GM12878 (cell line): ENCODE measurements at regions of chr5 and their contacts with region 1.

Region 1: DNA sequence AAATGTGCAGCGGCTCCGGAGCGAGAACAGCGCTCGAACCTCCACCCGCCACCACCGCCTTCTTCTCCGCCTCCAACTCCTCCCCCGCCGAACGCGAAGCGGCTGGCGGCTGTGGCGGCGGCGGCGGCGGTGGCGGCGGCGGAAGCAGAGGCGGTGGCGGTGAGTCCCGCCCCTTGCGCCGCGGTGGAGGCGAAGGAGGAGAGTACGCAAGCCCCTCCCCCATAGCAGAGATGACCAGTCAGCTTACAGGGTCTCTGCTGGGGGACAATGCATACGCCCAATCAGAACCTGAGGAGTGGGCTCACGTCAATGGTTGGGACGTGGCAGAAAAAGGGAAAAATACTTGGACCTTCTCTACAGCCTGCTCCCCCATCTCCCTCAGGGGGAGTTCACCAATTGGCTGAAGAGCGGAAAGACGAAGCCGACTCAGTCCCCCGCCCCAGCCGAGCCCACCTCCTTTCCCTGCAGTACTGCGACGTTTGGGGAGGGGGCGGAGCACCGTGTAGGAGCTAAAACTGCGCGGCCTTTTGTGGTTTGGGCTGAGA is at the start of gene PJA2:
- DNase-seq: peak; percentile 99
- ATAC-seq: peak; percentile 84
- H3K4me3 ChIP-seq: peak within 1 kb of the TSS; percentile 92
- H3K27ac ChIP-seq: peak within 1 kb of the TSS; percentile 98
- H3K4me1 ChIP-seq: peaks cover 10% of the 10 kb centered on the region; the same call in 1 of the 2 replicates
- H3K27me3 ChIP-seq: no peaks in the 10 kb centered on the region
- CTCF ChIP-seq: no peak
- EP300 ChIP-seq: peak in 1 of 2 experiments; percentile 60; a peak in 2 of 4 replicates
- POLR2A ChIP-seq: no peak
- RAD21 ChIP-seq: no peak
- polyA plus RNA-seq, gene PJA2: 27.8 to 28.2 TPM

Region 2: GRCh38 chr5:108381954-108382783 is 1027.7 kb before region 1 on chr5 and contains the start of gene FBXL17:
- CTCF ChIA-PET with region 1: no interaction called
- POLR2A ChIA-PET with region 1: no interaction called
- RAD21 ChIA-PET with region 1: no interaction called
- SMC1A ChIA-PET with region 1: no interaction called
- in situ Hi-C with region 1: no loop called
- intact Hi-C with region 1: loop called (anchors 5 kb)
- DNase-seq: peak; percentile 73
- ATAC-seq: peak; percentile 82
- H3K4me3 ChIP-seq: peak within 1 kb of the TSS; percentile 76
- H3K27ac ChIP-seq: peak within 1 kb of the TSS; percentile 94
- H3K4me1 ChIP-seq: 0 out of 2 replicates have a peak, but pooled peaks cover 2% of the 10 kb centered on the region
- H3K27me3 ChIP-seq: no peaks in the 10 kb centered on the region
- CTCF ChIP-seq: no peak
- EP300 ChIP-seq: peak; percentile 28 to 54; a peak in 1 of 4 replicates
- POLR2A ChIP-seq: peak; percentile 91
- RAD21 ChIP-seq: no peak
- polyA plus RNA-seq, gene FBXL17: 0.88 to 2.1 TPM

Region 3: DNA sequence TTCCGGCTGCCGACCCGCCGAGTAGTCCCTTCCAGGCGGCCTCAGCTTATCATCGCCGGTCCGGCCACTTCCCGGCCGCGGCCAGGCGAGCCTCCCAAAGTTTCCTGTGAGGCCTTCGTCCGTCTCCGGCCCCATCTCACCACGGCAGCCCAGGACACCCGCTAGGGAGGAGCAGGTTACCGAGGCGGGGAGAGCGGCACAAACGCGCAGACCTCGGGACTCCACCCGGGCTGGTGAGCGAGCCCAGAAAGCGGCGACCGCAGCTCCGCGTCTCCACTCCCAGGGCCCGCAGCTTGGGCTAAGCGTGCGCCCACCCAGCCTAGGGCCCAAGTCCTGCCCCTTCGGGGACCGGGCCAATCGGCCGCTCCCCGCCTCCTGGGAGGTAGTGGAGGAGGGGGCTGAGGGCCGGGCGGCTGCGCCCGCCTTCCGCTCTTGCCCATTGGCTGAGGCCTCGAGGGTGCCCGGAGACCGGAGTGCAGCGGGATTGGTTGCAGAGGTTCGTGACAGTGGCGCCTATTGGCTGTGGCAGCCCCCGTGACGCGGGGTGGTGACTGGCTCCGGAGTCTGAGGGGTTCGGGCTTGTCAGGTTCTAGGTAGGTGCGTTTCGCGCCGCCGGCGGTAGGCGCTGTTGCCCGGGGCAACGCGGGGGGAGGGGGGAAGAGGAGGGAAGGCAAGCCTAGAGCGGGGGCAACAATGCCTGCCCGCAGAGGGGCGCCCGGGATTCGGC is 661.4 kb before region 1 on chr5:
- CTCF ChIA-PET with region 1: no interaction called
- POLR2A ChIA-PET with region 1: interaction called, 4 read pairs
- RAD21 ChIA-PET with region 1: no interaction called
- SMC1A ChIA-PET with region 1: interaction called, 3 read pairs
- in situ Hi-C with region 1: no loop called
- intact Hi-C with region 1: loop called (anchors 1 kb)
- DNase-seq: peak; percentile 97
- ATAC-seq: peak; percentile 94
- H3K4me3 ChIP-seq: peak overlapping the region; percentile 93
- H3K27ac ChIP-seq: peak overlapping the region; percentile 90
- H3K4me1 ChIP-seq: no peaks in the 10 kb centered on the region
- H3K27me3 ChIP-seq: no peaks in the 10 kb centered on the region
- CTCF ChIP-seq: peak in 1 of 3 experiments; percentile 14; a peak in 1 of 6 replicates
- EP300 ChIP-seq: no peak
- POLR2A ChIP-seq: peak; percentile 99
- RAD21 ChIP-seq: peak; percentile 31; the same call in 1 of the 2 replicates

Region 4: GRCh38 chr5:109136906-109137305 is 273.0 kb before region 1 on chr5:
- CTCF ChIA-PET with region 1: no interaction called
- POLR2A ChIA-PET with region 1: no interaction called
- RAD21 ChIA-PET with region 1: no interaction called
- SMC1A ChIA-PET with region 1: no interaction called
- in situ Hi-C with region 1: no loop called
- intact Hi-C with region 1: no loop called
- DNase-seq: no peak
- ATAC-seq: no peak
- H3K4me3 ChIP-seq: no peak overlapping the region
- H3K27ac ChIP-seq: no peak overlapping the region
- H3K4me1 ChIP-seq: no peaks in the 10 kb centered on the region
- H3K27me3 ChIP-seq: no peaks in the 10 kb centered on the region
- CTCF ChIP-seq: no peak
- EP300 ChIP-seq: no peak
- POLR2A ChIP-seq: no peak
- RAD21 ChIP-seq: no peak